ENCODE measurements at regions of chr10 and their contacts with region 1.

Region 1: GRCh38 chr10:127853868-127854768 is 38.6 kb downstream of the CLRN3 start:
- DNase-seq: peak; percentile 48 to 69
- ATAC-seq: peak; percentile 78 to 94 (median 90)
- H3K4me3 ChIP-seq: no peak overlapping the region
- H3K27ac ChIP-seq: no peak overlapping the region
- H3K4me1 ChIP-seq: peaks cover 0 to 8% (median 4%) of the 10 kb centered on the region in 9 donors
- H3K27me3 ChIP-seq: peaks cover 0 to 24% (median 8%) of the 10 kb centered on the region in 7 donors
- CTCF ChIP-seq: peak; percentile 78 to 90 (median 81)

Region 2: GRCh38 chr10:127577376-127577775 is 276.7 kb before region 1 on chr10:
- intact Hi-C with region 1: loop called in 1 of 10 experiments (anchors 10 kb)
- DNase-seq: no peak
- ATAC-seq: no peak
- H3K4me3 ChIP-seq: no peak overlapping the region
- H3K27ac ChIP-seq: peak overlapping the region in 4 of 10 donors; percentile 58 to 87 (median 81)
- H3K4me1 ChIP-seq: peaks cover 0 to 43% (median 28%) of the 10 kb centered on the region in 9 donors
- H3K27me3 ChIP-seq: no peaks in the 10 kb centered on the region
- CTCF ChIP-seq: peak in 6 of 9 donors; percentile 13 to 56 (median 30)

Region 3: DNA sequence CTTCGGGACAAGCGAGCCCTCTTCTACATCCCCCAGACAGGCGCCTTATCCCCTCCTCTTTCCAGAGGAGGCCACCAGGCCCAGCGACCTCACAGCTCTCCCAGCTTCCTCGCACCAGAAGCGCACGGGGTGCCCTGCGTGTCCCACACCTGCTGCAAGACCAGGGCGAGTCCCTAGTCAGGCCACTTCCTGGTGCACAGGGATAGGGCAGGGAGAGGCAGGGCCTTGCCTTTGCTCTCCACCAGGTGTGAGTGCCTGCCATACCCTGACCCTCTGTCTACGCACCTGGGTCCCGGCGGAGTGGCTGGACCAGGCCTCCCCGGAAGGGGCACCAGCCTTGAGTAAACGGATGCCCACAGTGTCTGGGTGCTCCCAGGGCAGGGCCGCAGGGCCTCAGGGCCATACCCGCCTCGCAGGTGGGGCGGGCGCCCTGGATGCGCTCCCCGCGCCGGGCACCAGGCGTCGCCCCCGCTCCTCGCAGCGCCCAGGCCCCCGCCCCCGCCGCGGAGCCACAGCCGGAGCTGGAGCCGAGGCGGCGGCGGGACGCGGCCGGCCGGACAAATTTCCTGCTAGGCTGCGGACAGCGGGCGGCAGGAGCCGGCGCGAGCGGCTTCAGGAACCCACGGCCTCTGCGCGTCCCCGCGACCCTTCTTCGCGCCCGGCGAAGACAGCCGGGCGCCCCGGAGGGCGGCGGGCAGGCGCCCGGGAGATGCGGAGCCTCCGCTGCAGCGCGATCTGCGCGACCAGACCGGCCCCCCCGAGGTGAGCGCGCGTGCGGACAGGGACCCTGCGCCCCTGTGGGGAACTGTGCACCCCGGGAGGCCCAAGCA is 52.6 kb after region 1 on chr10 and contains the start of gene PTPRE:
- intact Hi-C with region 1: no loop called
- DNase-seq: peak; percentile 70 to 83
- ATAC-seq: peak; percentile 76 to 92 (median 88)
- H3K4me3 ChIP-seq: peak within 1 kb of the TSS; percentile 66 to 92 (median 76)
- H3K27ac ChIP-seq: peak within 1 kb of the TSS; percentile 76 to 96 (median 90)
- H3K4me1 ChIP-seq: peaks cover 2 to 48% (median 33%) of the 10 kb centered on the region in 9 donors
- H3K27me3 ChIP-seq: peaks cover 0 to 6% (median 0%) of the 10 kb centered on the region in 7 donors
- CTCF ChIP-seq: peak; percentile 62 to 98 (median 81)
- total RNA-seq, gene PTPRE: 17.1 to 42.8 (median 23.0) TPM

Region 4: DNA sequence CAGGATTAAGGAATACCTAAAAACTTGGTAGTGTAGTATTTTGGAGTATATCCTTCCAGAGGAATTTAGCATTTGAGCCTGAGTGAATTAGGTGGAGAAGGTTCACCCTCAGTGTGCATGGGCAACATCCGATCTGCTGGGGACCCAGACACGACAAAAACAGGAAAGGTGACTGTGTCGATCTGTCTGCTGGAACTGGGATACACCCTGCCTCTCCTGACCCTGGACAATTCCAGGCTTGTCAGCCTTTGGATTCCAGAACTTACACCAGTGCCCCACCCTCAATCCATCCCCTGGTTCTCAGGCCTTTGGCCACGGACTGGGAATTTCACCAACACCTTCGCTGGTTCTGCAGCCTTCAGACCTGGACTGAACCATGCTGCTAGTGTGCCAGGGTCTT is 94.7 kb after region 1 on chr10:
- intact Hi-C with region 1: no loop called
- DNase-seq: no peak
- ATAC-seq: peak in 2 of 8 donors; percentile 17 to 44
- H3K4me3 ChIP-seq: no peak overlapping the region
- H3K27ac ChIP-seq: no peak overlapping the region
- H3K4me1 ChIP-seq: peaks cover 3 to 30% (median 22%) of the 10 kb centered on the region in 9 donors
- H3K27me3 ChIP-seq: no peaks in the 10 kb centered on the region
- CTCF ChIP-seq: no peak